B cell (primary cell): ENCODE measurements at regions of chr10 and their contacts with region 1.

Region 1: GRCh38 chr10:35126530-35127296 is at the start of gene CREM:
- DNase-seq: peak; percentile 99
- ATAC-seq: peak; percentile 84
- H3K4me3 ChIP-seq: peak within 1 kb of the TSS; percentile 43 to 99 (median 93)
- H3K4me3 Mint-ChIP-seq: peak within 1 kb of the TSS; percentile 81
- H3K27ac ChIP-seq: peak within 1 kb of the TSS; percentile 94 to 100
- H3K27ac Mint-ChIP-seq: peak within 1 kb of the TSS; percentile 100
- H3K4me1 ChIP-seq: peaks cover 8 to 17% of the 10 kb centered on the region in 2 donors
- H3K4me1 Mint-ChIP-seq: peaks cover 37% of the 10 kb centered on the region
- H3K27me3 ChIP-seq: no peaks in the 10 kb centered on the region
- H3K27me3 Mint-ChIP-seq: no peaks in the 10 kb centered on the region
- CTCF ChIP-seq: peak; percentile 80
- total RNA-seq, gene CREM: 94.6 and 97.4 TPM in 2 replicates

Region 2: GRCh38 chr10:34723750-34724149 is 403.0 kb before region 1 on chr10:
- CTCF ChIA-PET with region 1: no interaction called
- POLR2A ChIA-PET with region 1: no interaction called
- intact Hi-C with region 1: no loop called
- DNase-seq: no peak
- ATAC-seq: no peak
- H3K4me3 ChIP-seq: no peak overlapping the region
- H3K4me3 Mint-ChIP-seq: no peak overlapping the region
- H3K27ac ChIP-seq: no peak overlapping the region
- H3K27ac Mint-ChIP-seq: no peak overlapping the region
- H3K4me1 ChIP-seq: peaks cover 0 to 4% of the 10 kb centered on the region in 2 donors
- H3K4me1 Mint-ChIP-seq: peaks cover 7% of the 10 kb centered on the region
- H3K27me3 ChIP-seq: peaks cover 0 to 2% (median 0%) of the 10 kb centered on the region in 4 experiments
- H3K27me3 Mint-ChIP-seq: no peaks in the 10 kb centered on the region
- CTCF ChIP-seq: no peak

Region 3: GRCh38 chr10:35153716-35154479 is 27.2 kb after region 1 on chr10:
- CTCF ChIA-PET with region 1: interaction called, 15 read pairs
- POLR2A ChIA-PET with region 1: interaction called, 13 read pairs
- intact Hi-C with region 1: loop called (anchors 1 kb)
- DNase-seq: no peak
- ATAC-seq: no peak
- H3K4me3 ChIP-seq: no peak overlapping the region
- H3K4me3 Mint-ChIP-seq: no peak overlapping the region
- H3K27ac ChIP-seq: no peak overlapping the region
- H3K27ac Mint-ChIP-seq: no peak overlapping the region
- H3K4me1 ChIP-seq: peaks cover 20 to 22% of the 10 kb centered on the region in 2 donors
- H3K4me1 Mint-ChIP-seq: peaks cover 26% of the 10 kb centered on the region
- H3K27me3 ChIP-seq: no peaks in the 10 kb centered on the region
- H3K27me3 Mint-ChIP-seq: no peaks in the 10 kb centered on the region
- CTCF ChIP-seq: no peak

Region 4: GRCh38 chr10:35218339-35218955 is 91.7 kb after region 1 on chr10:
- CTCF ChIA-PET with region 1: interaction called, 436 read pairs
- POLR2A ChIA-PET with region 1: no interaction called
- intact Hi-C with region 1: loop called (anchors 1 kb)
- DNase-seq: peak; percentile 87
- ATAC-seq: peak; percentile 78
- H3K4me3 ChIP-seq: no peak overlapping the region
- H3K4me3 Mint-ChIP-seq: no peak overlapping the region
- H3K27ac ChIP-seq: no peak overlapping the region
- H3K27ac Mint-ChIP-seq: no peak overlapping the region
- H3K4me1 ChIP-seq: no peaks in the 10 kb centered on the region
- H3K4me1 Mint-ChIP-seq: peaks cover 12% of the 10 kb centered on the region
- H3K27me3 ChIP-seq: peaks cover 0 to 2% (median 0%) of the 10 kb centered on the region in 4 experiments
- H3K27me3 Mint-ChIP-seq: peaks cover 12% of the 10 kb centered on the region
- CTCF ChIP-seq: peak; percentile 88

Region 5: GRCh38 chr10:35251373-35252100 is 124.8 kb after region 1 on chr10:
- CTCF ChIA-PET with region 1: no interaction called
- POLR2A ChIA-PET with region 1: no interaction called
- intact Hi-C with region 1: no loop called
- DNase-seq: no peak
- ATAC-seq: no peak
- H3K4me3 ChIP-seq: no peak overlapping the region
- H3K4me3 Mint-ChIP-seq: no peak overlapping the region
- H3K27ac ChIP-seq: no peak overlapping the region
- H3K27ac Mint-ChIP-seq: no peak overlapping the region
- H3K4me1 ChIP-seq: no peaks in the 10 kb centered on the region
- H3K4me1 Mint-ChIP-seq: no peaks in the 10 kb centered on the region
- H3K27me3 ChIP-seq: no peaks in the 10 kb centered on the region
- H3K27me3 Mint-ChIP-seq: no peaks in the 10 kb centered on the region
- CTCF ChIP-seq: no peak

Region 6: DNA sequence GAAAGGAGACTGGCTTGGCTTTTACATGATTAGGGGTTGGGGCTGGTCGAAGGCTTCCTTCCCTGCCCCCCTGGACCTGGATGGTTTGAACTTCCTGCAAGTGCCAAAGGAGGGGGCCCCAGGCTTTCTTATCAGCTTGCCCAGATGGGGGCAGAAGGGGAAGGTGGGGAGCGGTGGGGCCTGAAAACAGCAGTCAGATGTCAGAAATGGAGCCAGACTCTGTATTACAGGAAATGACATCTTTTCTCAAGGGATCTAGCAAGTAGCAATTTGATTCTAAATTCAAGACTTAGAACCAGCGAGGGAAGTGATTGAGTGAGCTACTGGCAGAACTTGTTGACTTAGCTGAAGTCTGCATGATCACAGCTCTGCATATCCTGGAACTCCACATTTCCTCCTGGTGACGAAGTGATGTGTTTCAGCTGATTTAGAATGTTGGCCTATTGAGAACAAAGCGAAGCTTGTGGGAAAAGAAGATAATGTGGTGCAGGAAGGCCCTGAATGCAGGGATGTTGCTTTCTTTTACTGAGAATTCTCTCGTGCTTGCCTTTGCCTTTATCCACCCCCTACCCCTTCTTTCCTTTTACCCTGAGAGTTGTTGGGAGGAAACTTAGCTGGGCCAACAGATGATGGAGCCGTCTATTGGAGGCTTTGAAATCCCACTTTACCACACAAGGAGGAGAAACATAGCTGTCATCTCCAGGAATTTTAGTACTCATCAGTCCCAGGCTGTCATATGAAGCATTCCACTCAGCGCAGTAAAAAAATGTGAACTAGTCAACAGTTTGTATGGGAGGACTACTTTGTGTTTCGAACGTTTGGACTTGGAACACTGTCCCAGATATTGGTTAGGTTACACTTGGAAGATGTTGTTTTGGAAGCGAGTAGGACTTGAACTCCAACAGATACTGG is 252.8 kb after region 1 on chr10:
- CTCF ChIA-PET with region 1: interaction called, 3 read pairs
- POLR2A ChIA-PET with region 1: no interaction called
- intact Hi-C with region 1: loop called (anchors 1 kb)
- DNase-seq: peak; percentile 90
- ATAC-seq: peak; percentile 95
- H3K4me3 ChIP-seq: peak overlapping the region in 4 of 5 experiments; percentile 16 to 42 (median 22)
- H3K4me3 Mint-ChIP-seq: peak overlapping the region; percentile 79
- H3K27ac ChIP-seq: peak overlapping the region; percentile 73 to 84
- H3K27ac Mint-ChIP-seq: peak overlapping the region; percentile 91
- H3K4me1 ChIP-seq: peaks cover 32 to 35% of the 10 kb centered on the region in 2 donors
- H3K4me1 Mint-ChIP-seq: peaks cover 65% of the 10 kb centered on the region
- H3K27me3 ChIP-seq: no peaks in the 10 kb centered on the region
- H3K27me3 Mint-ChIP-seq: no peaks in the 10 kb centered on the region
- CTCF ChIP-seq: peak; percentile 73

Region 7: DNA sequence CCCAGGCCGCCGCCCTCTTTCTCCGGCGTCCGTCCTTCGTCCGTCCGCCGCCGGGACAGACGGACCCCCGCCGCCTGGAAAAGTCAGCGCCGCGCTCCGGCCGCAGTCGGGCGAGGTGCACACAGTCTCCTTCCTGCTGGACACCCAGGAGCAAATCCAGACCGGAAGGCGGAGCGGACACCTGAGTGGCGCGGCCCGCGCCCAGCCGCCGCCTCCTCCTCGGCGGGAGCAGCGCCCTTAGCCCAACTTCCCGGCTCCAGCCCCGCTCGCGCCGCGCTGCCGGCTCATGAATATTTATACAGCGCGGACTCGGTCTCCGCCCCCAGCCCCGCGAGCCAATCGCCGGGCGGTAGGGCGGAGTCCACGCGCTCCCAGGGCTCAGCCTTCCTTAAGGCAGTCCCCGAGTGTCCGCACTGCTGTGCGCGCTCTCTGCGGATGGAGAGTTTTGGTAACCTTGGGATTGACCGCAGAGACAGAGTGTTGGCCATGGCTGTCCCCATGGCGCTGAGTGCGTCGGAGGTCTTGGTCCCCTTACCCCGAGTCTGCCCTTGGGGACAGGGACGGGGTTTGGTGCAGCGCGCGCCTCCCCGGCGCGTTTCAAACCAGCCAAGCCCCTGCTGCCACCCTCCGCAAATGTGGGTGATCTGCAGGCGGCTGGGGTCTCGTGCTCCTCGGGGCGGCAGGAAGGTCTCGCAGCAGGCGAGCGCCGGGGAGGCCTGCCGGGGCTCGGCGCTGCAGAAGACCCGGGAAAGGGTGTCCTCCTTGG is 515.5 kb after region 1 on chr10 and contains the start of gene FZD8:
- CTCF ChIA-PET with region 1: no interaction called
- POLR2A ChIA-PET with region 1: no interaction called
- intact Hi-C with region 1: loop called (anchors 5 kb)
- DNase-seq: peak; percentile 86
- ATAC-seq: peak; percentile 89
- H3K4me3 ChIP-seq: peak within 1 kb of the TSS; percentile 48 to 74 (median 63)
- H3K4me3 Mint-ChIP-seq: peak within 1 kb of the TSS; percentile 94
- H3K27ac ChIP-seq: no peak within 1 kb of the TSS
- H3K27ac Mint-ChIP-seq: peak within 1 kb of the TSS; percentile 47
- H3K4me1 ChIP-seq: peaks cover 22 to 29% of the 10 kb centered on the region in 2 donors
- H3K4me1 Mint-ChIP-seq: peaks cover 32% of the 10 kb centered on the region
- H3K27me3 ChIP-seq: peaks cover 0 to 43% (median 23%) of the 10 kb centered on the region in 4 experiments
- H3K27me3 Mint-ChIP-seq: peaks cover 35% of the 10 kb centered on the region
- CTCF ChIP-seq: no peak
- total RNA-seq, gene FZD8: 1.7 and 1.9 TPM in 2 replicates